ENCODE measurements at regions of chr7 and their contacts with region 1.

Region 1: DNA sequence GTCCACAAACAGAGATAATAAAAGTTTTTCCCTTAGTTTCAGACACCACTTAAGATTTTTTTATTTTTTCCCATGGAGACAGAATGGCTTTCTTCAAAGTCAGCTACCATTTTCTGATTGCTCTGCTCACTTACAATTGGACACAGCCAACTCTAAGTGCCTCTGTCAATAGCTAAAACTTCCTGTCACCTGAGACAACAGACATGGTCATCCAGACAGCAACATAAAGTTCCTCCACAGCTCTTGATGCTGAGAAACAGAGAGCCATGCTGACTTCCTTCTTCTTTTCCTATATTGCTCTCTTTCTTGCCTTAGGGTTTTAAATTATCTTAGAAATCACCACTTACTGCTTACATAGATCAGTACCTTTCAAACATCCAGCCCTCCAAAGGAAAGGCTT is 12.0 kb downstream of the ZNF800 start:
- DNase-seq: peak; percentile 13
- H3K4me3 ChIP-seq: no peak overlapping the region
- H3K27ac ChIP-seq: no peak overlapping the region
- H3K4me1 ChIP-seq: peaks cover 10% of the 10 kb centered on the region
- CTCF ChIP-seq: no peak

Region 2: DNA sequence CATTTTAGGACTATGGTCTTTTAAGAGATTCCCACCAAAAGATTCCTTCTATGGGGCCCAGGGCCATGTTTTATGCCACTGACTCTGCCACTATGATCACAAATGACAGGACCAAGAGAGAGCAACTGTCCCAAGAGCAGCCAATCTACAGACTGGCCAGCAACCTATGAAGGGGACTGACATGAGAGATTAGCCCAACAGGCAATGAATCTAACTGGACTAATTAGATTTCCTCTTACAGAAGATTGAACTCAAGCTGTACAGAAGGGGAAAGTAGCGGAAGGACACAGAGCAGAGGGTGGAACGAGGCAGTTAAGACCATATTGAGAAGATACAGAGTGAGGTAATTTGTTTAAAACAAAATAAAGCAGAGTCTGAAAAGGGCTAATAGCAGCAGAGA is 13.8 kb before region 1 on chr7:
- CTCF ChIA-PET with region 1: interaction called, 4 read pairs
- POLR2A ChIA-PET with region 1: interaction called, 15 read pairs
- intact Hi-C with region 1: no loop called
- DNase-seq: no peak
- H3K4me3 ChIP-seq: no peak overlapping the region
- H3K27ac ChIP-seq: no peak overlapping the region
- H3K4me1 ChIP-seq: no peaks in the 10 kb centered on the region
- CTCF ChIP-seq: no peak

Measured in OCI-LY7 (cell line).